ENCODE measurements at regions of chr13 and their contacts with region 1.

Region 1: DNA sequence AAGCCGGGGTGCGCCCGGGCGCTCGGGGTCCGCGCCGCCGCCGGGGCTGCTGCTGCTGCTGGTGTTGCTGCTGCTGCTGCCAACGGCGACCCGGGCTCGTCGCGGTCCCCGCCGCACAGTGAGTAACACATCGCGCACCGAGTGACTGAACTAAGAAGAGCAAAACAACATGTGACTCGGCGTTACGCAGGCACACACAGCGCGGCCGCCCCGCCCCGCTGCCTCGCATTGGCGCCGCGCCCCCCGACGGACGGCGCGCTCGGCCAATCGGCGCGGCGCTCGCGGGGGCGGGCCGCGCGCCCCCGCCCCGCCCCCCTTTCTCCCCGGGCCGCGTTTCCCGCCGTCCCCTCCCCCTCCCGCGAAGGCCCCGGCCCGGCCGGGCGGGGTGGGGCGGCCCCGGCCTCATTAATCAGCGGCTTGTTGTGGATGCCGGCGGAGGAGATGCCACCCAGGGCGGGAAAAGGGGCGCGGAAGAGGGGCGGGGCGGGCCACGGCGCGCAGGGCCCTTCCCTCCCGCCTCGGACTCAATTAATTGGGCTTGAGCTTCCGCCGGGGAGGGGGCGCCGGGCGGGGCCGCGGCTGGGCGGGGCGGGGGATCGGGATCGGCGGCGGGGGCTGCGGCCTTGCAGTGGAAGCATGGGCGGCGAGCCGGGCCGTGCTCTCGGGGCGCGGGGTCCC is at the start of gene IRS2:
- DNase-seq: peak; percentile 86 to 97 (median 96)
- ATAC-seq: peak; percentile 89
- H3K4me3 ChIP-seq: peak within 1 kb of the TSS; percentile 53
- H3K4me3 Mint-ChIP-seq: peak within 1 kb of the TSS; percentile 74 to 92 (median 84)
- H3K27ac ChIP-seq: peak within 1 kb of the TSS; percentile 80
- H3K27ac Mint-ChIP-seq: peak within 1 kb of the TSS; percentile 74 to 95 (median 89)
- H3K4me1 ChIP-seq: peaks cover 0 to 6% of the 10 kb centered on the region in 2 donors
- H3K4me1 Mint-ChIP-seq: peaks cover 15 to 33% (median 24%) of the 10 kb centered on the region in 7 donors
- H3K27me3 ChIP-seq: no peaks in the 10 kb centered on the region
- H3K27me3 Mint-ChIP-seq: peaks cover 0 to 35% (median 0%) of the 10 kb centered on the region in 5 donors
- total RNA-seq, gene IRS2: 3.8 to 94.9 (median 26.9) TPM

Region 2: GRCh38 chr13:108218044-108218974 is 1568.3 kb before region 1 on chr13 and contains the start of gene ABHD13:
- CTCF ChIA-PET with region 1: no interaction called
- POLR2A ChIA-PET with region 1: interaction called, 3 read pairs
- intact Hi-C with region 1: loop called (anchors 1 to 2 kb)
- DNase-seq: peak; percentile 88 to 98 (median 93)
- ATAC-seq: peak; percentile 81
- H3K4me3 ChIP-seq: peak within 1 kb of the TSS; percentile 98
- H3K4me3 Mint-ChIP-seq: peak within 1 kb of the TSS; percentile 92 to 98 (median 96)
- H3K27ac ChIP-seq: peak within 1 kb of the TSS; percentile 79
- H3K27ac Mint-ChIP-seq: peak within 1 kb of the TSS; percentile 95 to 98 (median 96)
- H3K4me1 ChIP-seq: peaks cover 34 to 50% of the 10 kb centered on the region in 2 donors
- H3K4me1 Mint-ChIP-seq: peaks cover 16 to 77% (median 72%) of the 10 kb centered on the region in 7 donors
- H3K27me3 ChIP-seq: no peaks in the 10 kb centered on the region
- H3K27me3 Mint-ChIP-seq: peaks cover 0 to 4% (median 0%) of the 10 kb centered on the region in 5 donors
- total RNA-seq, gene ABHD13: 10.3 to 19.8 (median 12.7) TPM

Region 3: DNA sequence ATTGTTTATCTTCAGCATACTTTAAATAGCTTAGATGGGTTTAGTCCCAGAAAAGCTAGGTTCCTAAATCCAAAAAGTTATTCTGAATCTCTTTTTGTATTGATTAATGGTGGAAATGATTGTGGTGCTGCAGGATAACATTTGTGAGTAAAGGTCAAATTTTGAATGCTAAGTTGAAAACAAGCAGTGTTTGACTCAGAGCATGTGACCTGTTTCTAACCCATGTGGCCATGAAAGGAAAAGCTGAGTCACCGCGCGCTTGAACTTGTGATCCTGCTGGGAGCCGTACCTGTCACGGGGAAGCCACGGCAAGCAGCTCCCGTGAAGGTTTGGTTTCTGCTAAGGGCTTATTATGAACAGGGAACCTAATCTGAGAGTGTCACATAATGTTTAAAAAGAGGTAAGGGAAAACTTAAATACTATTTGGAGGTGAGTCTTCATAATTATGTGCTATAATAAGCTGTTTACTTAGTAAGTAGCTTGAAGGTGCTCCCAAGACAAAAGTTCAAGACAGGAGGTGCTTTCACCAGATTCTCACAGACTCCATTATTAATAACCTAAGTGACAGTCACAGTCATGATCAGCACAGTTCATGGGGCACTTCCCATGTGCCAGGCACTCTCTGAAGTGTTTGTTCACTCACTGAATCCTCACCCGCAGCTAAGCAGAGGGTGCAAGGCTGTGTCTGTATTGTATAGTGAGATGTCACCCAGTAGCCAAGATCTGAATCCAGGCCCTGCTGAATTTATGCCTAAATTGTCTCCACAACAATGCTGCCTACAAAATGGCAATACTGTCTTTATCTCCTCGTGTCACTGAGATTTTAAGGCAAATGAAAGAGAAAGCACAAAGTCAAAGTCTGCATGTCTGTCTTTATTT is 870.7 kb before region 1 on chr13:
- CTCF ChIA-PET with region 1: no interaction called
- POLR2A ChIA-PET with region 1: no interaction called
- intact Hi-C with region 1: loop called (anchors 1 to 5 kb)
- DNase-seq: peak in 4 of 9 donors; percentile 6 to 77 (median 32)
- ATAC-seq: peak; percentile 68
- H3K4me3 ChIP-seq: no peak overlapping the region
- H3K4me3 Mint-ChIP-seq: peak overlapping the region in 9 of 10 donors; percentile 26 to 82 (median 62)
- H3K27ac ChIP-seq: no peak overlapping the region
- H3K27ac Mint-ChIP-seq: peak overlapping the region in 3 of 9 donors; percentile 22 to 96 (median 77)
- H3K4me1 ChIP-seq: peaks cover 0 to 6% of the 10 kb centered on the region in 2 donors
- H3K4me1 Mint-ChIP-seq: peaks cover 7 to 20% (median 17%) of the 10 kb centered on the region in 7 donors
- H3K27me3 ChIP-seq: no peaks in the 10 kb centered on the region
- H3K27me3 Mint-ChIP-seq: peaks cover 3 to 16% (median 9%) of the 10 kb centered on the region in 5 donors

Region 4: GRCh38 chr13:109427695-109428094 is 358.9 kb before region 1 on chr13:
- CTCF ChIA-PET with region 1: interaction called, 5 read pairs
- POLR2A ChIA-PET with region 1: no interaction called
- intact Hi-C with region 1: loop called in 1 of 2 experiments (anchors 1 kb)
- DNase-seq: no peak
- ATAC-seq: no peak
- H3K4me3 ChIP-seq: no peak overlapping the region
- H3K4me3 Mint-ChIP-seq: no peak overlapping the region
- H3K27ac ChIP-seq: no peak overlapping the region
- H3K27ac Mint-ChIP-seq: no peak overlapping the region
- H3K4me1 ChIP-seq: no peaks in the 10 kb centered on the region
- H3K4me1 Mint-ChIP-seq: peaks cover 0 to 2% (median 0%) of the 10 kb centered on the region in 7 donors
- H3K27me3 ChIP-seq: no peaks in the 10 kb centered on the region
- H3K27me3 Mint-ChIP-seq: peaks cover 0 to 9% (median 5%) of the 10 kb centered on the region in 5 donors

Region 5: DNA sequence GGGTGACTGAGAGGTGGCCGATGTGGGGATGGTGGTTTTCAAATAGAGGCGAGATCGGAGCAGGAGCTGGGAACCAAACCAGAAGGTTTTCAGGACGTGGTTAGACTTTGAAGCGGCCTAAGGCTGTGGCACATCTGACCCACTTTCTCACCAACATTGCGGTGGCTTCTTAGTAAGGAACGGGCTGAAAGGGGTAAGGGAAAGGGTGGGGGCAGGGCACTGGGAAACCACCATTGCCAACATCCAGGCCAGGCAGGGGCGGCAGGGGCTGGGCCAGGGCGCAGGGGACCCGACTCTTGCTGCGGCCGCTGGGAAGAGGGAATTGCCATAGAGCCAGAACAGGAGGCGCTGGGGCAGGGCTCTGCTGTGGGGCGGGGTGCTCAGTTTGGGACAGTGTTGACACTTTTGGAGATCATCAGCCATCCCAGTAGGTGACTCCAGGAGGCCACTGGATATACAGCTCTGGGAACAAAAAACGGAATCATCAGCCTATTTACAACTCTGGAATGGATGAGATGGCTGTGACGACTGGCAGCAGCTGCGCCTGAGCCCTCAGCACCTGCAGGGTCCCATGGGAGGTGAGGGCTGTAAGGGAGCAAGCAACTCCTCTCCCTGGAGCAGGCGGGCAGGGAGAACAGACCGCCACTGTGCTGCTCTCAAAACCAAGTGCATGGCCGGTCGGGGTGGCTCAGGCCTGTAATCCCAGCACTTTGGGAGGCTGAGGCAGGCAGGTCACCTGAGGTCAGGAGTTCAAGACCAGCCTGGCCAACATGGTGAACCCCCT is 52.4 kb before region 1 on chr13:
- CTCF ChIA-PET with region 1: interaction called, 3 read pairs
- POLR2A ChIA-PET with region 1: no interaction called
- intact Hi-C with region 1: loop called in 1 of 2 experiments (anchors 5 kb)
- DNase-seq: no peak
- ATAC-seq: no peak
- H3K4me3 ChIP-seq: no peak overlapping the region
- H3K4me3 Mint-ChIP-seq: no peak overlapping the region
- H3K27ac ChIP-seq: no peak overlapping the region
- H3K27ac Mint-ChIP-seq: no peak overlapping the region
- H3K4me1 ChIP-seq: peaks cover 0 to 8% of the 10 kb centered on the region in 2 donors
- H3K4me1 Mint-ChIP-seq: peaks cover 0 to 23% (median 6%) of the 10 kb centered on the region in 7 donors
- H3K27me3 ChIP-seq: no peaks in the 10 kb centered on the region
- H3K27me3 Mint-ChIP-seq: peaks cover 0 to 12% (median 4%) of the 10 kb centered on the region in 5 donors

Region 6: DNA sequence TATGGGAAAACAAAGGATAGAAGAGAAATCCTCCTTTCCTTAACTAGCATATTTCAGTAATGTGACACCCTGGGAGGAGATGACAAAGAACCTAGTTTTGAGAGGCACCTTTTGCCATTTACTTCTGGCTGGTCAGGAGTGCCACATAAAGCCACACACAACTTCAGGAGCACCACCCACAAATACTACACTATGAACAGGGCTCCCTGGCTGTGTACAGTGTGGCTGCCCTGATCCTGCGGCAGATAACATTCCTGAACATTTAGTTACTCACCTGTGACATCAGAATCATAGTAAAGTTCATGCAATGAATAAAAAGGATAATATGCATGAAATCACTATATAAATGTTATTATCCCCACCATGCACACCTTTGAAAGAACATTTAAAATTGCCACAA is 17.2 kb after region 1 on chr13:
- CTCF ChIA-PET with region 1: no interaction called
- POLR2A ChIA-PET with region 1: no interaction called
- intact Hi-C with region 1: no loop called
- DNase-seq: no peak
- ATAC-seq: no peak
- H3K4me3 ChIP-seq: no peak overlapping the region
- H3K4me3 Mint-ChIP-seq: no peak overlapping the region
- H3K27ac ChIP-seq: no peak overlapping the region
- H3K27ac Mint-ChIP-seq: no peak overlapping the region
- H3K4me1 ChIP-seq: no peaks in the 10 kb centered on the region
- H3K4me1 Mint-ChIP-seq: no peaks in the 10 kb centered on the region
- H3K27me3 ChIP-seq: no peaks in the 10 kb centered on the region
- H3K27me3 Mint-ChIP-seq: peaks cover 14 to 35% (median 18%) of the 10 kb centered on the region in 5 donors

Region 7: GRCh38 chr13:110138010-110138699 is 351.6 kb after region 1 on chr13:
- CTCF ChIA-PET with region 1: no interaction called
- POLR2A ChIA-PET with region 1: no interaction called
- intact Hi-C with region 1: loop called in 1 of 2 experiments (anchors 5 kb)
- DNase-seq: peak in 2 of 9 donors; percentile 36 to 78
- ATAC-seq: peak; percentile 85
- H3K4me3 ChIP-seq: peak overlapping the region; percentile 38
- H3K4me3 Mint-ChIP-seq: peak overlapping the region; percentile 65 to 85 (median 80)
- H3K27ac ChIP-seq: no peak overlapping the region
- H3K27ac Mint-ChIP-seq: peak overlapping the region in 3 of 9 donors; percentile 20 to 66 (median 38)
- H3K4me1 ChIP-seq: peaks cover 4 to 6% of the 10 kb centered on the region in 2 donors
- H3K4me1 Mint-ChIP-seq: peaks cover 9 to 15% (median 11%) of the 10 kb centered on the region in 7 donors
- H3K27me3 ChIP-seq: no peaks in the 10 kb centered on the region
- H3K27me3 Mint-ChIP-seq: peaks cover 27 to 53% (median 46%) of the 10 kb centered on the region in 5 donors

Region 8: DNA sequence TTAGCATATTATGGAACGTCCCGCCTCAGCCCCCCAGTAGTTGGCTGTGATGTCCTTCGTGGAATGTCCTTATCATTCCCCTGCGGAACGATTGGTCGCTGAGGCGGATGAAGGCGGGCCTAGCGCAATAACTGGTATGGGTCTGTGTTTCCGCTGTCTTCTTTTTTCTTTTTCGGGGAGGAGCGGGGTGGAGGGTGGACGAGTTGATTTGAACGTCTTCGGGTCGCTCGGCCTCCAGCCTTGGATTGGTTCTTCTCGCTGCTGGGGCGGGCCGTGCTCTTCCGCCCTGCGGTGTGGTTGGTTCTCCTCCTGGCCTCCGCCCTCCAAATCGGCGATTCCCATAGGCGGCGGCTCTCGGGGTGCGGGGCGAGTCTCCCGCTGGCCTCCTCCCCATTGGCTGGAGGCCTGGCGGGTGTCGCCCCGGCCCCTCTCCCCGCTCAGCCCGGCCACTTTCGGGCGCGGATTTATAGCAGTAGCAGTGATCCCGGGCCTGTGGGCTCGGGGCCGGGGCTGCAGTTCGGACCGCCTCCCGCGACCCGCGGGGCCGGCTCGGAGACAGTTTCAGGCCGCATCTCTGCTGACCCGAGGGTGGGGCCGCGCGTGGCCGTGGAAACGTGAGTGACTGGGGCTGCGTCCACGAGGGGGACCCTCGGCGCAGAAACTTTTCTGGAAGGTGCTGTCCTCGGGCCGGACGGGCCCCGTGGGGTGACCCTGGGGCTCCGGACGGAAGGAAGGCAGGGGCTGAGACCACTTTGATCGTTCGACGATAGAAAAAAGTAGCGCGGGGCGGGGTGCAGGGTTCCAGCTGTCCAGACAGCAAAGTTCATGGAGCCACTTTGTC is 929.0 kb after region 1 on chr13:
- CTCF ChIA-PET with region 1: no interaction called
- POLR2A ChIA-PET with region 1: no interaction called
- intact Hi-C with region 1: loop called in 1 of 2 experiments (anchors 2 kb)
- DNase-seq: peak; percentile 87 to 99 (median 99)
- ATAC-seq: peak; percentile 71
- H3K4me3 ChIP-seq: peak overlapping the region; percentile 68
- H3K4me3 Mint-ChIP-seq: peak overlapping the region; percentile 93 to 100 (median 98)
- H3K27ac ChIP-seq: peak overlapping the region; percentile 92
- H3K27ac Mint-ChIP-seq: peak overlapping the region; percentile 96 to 100 (median 98)
- H3K4me1 ChIP-seq: peaks cover 0 to 20% of the 10 kb centered on the region in 2 donors
- H3K4me1 Mint-ChIP-seq: peaks cover 21 to 56% (median 37%) of the 10 kb centered on the region in 7 donors
- H3K27me3 ChIP-seq: no peaks in the 10 kb centered on the region
- H3K27me3 Mint-ChIP-seq: peaks cover 0 to 4% (median 0%) of the 10 kb centered on the region in 5 donors